Dorsolateral prefrontal cortex (tissue), 120 donors: ENCODE measurements at regions of chr9 and their contacts with region 1.

Region 1: DNA sequence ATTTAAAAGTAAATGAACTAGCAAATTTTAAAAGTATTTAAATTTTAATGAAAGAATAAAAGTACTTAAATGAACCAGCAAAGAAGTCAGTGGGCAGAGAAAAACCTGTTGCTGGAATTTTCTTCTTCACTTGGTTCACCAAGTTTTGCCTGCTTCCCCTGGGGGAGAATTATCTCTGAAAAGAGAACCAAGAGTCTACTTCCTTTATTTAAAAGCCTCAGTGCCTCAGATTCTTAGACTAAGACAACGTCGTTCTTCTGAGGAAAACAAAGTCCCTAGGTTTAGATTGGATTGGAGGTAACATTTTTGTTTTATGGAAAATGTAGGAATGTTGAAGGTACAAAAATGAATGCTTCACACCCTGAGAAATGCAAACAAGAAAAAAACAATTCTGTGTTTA is 7.4 kb upstream of the KLF4 start:
- DNase-seq: no peak
- H3K4me3 ChIP-seq: no peak overlapping the region
- H3K27ac ChIP-seq: no peak overlapping the region
- H3K27me3 ChIP-seq: no peaks in the 10 kb centered on the region
- CTCF ChIP-seq: no peak

Region 2: DNA sequence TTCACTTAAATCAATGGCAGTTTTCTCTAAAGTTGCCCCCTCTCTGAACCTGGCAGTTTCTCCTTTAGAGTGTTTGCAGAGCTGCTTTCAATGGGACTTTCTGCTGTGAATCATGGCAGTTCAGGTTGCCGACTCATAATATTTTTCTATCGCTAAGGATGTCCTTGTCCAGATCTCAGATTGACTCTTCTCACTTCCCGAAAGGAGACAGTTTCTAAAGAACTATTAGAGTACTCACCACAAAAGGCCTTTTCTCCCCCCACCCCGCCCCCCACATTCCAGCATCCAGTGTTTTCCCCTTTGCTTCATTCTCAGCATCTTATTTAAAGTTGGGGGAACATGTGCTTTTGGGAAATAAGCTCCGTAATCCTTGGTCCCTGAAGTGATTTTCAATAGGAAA is 436.1 kb after region 1 on chr9:
- intact Hi-C with region 1: loop called in 1 of 2 experiments (anchors 5 kb)
- DNase-seq: no peak
- H3K4me3 ChIP-seq: no peak overlapping the region
- H3K27ac ChIP-seq: no peak overlapping the region
- H3K27me3 ChIP-seq: no peaks in the 10 kb centered on the region
- CTCF ChIP-seq: no peak